Psoas muscle (tissue), 8 donors: ENCODE measurements at regions of chr9 and their contacts with region 1.

Region 1: GRCh38 chr9:114906908-114907571 is 23.4 kb downstream of the TNFSF8 start:
- DNase-seq: no peak
- ATAC-seq: no peak
- H3K4me3 ChIP-seq: no peak overlapping the region
- H3K27ac ChIP-seq: no peak overlapping the region
- H3K4me1 ChIP-seq: no peaks in the 10 kb centered on the region
- H3K27me3 ChIP-seq: peaks cover 0 to 3% (median 0%) of the 10 kb centered on the region in 3 donors
- CTCF ChIP-seq: peak; percentile 28

Region 2: GRCh38 chr9:114487607-114488300 is 419.3 kb before region 1 on chr9:
- intact Hi-C with region 1: loop called in 1 of 2 experiments (anchors 10 kb)
- DNase-seq: no peak
- ATAC-seq: peak; percentile 69 to 83 (median 80)
- H3K4me3 ChIP-seq: no peak overlapping the region
- H3K27ac ChIP-seq: no peak overlapping the region
- H3K4me1 ChIP-seq: no peaks in the 10 kb centered on the region
- H3K27me3 ChIP-seq: no peaks in the 10 kb centered on the region
- CTCF ChIP-seq: peak; percentile 62

Region 3: DNA sequence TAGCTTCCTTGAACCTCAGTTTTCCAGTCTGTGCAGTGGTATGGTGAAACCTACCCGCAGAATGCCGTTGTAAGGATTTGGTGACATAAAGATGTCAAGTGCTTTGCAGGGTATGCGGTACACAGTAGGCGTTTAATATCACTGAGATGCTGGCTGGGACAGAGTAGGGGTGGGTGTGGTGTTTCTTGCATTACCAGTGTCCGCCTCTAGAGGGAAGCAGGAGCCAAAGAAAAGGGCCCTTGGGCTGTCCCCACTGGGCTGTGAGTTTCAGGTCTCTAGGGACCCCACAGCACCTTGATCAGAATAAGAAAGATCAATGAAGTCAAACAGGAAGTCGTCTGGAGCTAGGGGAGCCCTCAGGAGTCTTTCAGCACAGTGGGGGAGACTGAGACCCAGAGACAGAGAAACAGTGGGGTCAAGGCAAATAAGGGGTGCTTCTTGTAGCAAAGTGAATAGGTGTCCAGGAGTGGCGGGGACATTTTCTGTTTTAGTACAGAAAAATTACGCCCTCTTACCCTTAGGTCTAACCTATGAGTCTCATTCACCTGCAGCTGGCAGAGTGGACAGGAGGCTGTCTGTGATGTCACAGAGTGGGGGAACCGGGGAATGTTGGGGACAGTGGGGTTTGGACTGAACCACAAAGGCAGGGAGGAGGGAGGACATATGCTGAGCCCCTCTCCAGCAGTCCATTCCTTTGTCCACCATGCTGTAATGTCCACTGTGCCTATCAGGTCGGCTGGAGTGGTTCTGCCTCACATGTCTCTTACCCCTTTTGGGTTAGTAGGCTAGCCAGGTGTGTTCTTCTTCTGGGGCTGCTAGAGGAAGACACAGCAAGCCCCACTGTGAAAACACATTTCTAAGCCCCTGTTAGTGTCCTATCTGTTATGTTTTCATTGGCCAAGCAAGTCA is 244.7 kb before region 1 on chr9:
- intact Hi-C with region 1: loop called in 1 of 2 experiments (anchors 10 kb)
- DNase-seq: no peak
- ATAC-seq: peak; percentile 58 to 72 (median 69)
- H3K4me3 ChIP-seq: no peak overlapping the region
- H3K27ac ChIP-seq: no peak overlapping the region
- H3K4me1 ChIP-seq: no peaks in the 10 kb centered on the region
- H3K27me3 ChIP-seq: no peaks in the 10 kb centered on the region
- CTCF ChIP-seq: peak; percentile 72

Region 4: DNA sequence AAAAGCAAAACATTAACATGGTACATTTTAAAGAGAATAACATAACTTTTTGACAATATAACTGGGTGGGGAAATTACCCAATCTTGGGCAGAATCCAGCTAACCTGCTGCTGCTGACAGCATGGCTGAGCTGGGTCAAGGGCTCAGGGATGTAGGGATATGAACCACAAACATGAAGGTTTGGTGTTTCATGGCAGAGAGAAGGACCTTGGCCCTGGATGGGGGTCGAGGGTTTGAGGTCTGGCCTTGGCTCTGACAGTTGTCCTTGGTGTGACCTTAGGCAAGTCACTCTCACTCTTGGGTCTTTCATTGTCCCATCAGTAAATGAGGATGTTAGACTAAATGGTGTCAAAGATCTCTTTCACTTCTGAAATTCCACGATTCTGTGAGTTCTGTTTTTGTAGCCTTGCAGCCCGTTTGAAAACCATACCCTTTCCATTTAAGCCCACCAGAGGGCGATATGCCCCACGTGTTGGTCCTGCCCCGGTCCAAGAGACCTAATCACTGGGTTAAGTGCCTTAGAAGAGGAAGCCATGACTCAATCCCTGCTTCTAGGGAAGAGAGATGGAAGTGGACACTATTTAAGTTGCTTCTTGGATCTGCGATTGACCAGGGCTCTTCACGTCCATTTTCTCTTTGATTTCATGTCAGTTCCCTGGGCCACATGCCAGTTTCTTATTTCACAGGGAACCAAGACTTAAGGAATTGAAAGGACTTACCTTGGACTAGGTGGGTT is 168.3 kb before region 1 on chr9:
- intact Hi-C with region 1: loop called (anchors 1 to 10 kb)
- DNase-seq: peak; percentile 44 to 66
- ATAC-seq: peak; percentile 61 to 81 (median 80)
- H3K4me3 ChIP-seq: no peak overlapping the region
- H3K27ac ChIP-seq: no peak overlapping the region
- H3K4me1 ChIP-seq: no peaks in the 10 kb centered on the region
- H3K27me3 ChIP-seq: no peaks in the 10 kb centered on the region
- CTCF ChIP-seq: peak; percentile 86

Region 5: DNA sequence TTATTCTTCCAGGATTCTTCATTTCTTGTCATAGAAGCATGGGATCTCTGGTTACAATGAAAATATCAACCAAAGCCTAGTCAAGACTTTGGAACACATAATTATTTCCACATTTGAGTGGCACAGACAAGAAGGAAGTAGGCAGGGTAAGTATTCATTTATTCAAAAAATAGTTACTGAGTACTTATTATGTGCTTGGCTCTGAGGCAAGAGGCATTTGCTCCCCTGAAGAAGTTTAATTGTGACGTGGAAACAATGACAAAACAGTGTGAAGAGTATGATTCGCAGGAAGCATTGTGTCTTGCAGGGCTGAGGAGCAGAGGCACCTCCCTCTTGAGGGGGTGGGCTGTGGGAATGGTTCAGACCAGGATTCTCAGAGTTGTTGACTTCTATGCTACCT is 56.2 kb before region 1 on chr9:
- intact Hi-C with region 1: no loop called
- DNase-seq: no peak
- ATAC-seq: no peak
- H3K4me3 ChIP-seq: no peak overlapping the region
- H3K27ac ChIP-seq: no peak overlapping the region
- H3K4me1 ChIP-seq: no peaks in the 10 kb centered on the region
- H3K27me3 ChIP-seq: no peaks in the 10 kb centered on the region
- CTCF ChIP-seq: no peak